HepG2 (cell line): ENCODE measurements at regions of chr12 and their contacts with region 1.

Region 1: DNA sequence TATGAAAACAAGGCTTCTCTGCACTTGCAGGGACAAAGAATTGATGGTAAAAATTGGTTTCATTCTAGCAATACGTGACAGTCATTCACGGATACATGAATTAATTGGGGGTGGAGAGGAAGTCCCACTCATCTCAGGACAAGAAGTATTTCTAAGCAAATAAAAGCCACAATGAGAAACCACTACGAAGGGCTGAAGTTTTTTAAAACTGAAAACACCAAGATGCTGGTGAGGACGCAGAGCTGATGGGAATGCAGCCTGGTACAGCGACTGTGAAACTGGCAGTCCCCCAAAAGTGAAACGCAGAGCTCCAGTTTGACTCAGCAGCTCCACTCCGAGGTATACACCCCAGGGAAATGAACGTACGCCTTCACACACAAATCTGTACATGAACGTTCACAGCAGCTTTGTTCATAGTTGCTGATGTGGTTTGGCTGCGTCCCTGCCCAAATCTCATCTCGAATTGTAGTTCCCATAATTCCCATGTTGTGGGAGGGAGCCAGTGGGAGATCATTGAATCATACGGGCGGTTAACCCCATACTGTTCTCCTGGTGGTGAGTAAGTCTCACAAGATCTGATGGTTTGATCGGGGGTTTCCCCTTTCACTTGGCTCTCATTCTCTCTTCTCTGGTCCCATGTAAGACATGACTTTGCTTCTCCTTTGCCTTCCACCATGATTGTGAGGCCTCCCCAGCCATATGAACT is 89.0 kb downstream of the SCARB1 start:
- DNase-seq: no peak
- ATAC-seq: no peak
- H3K4me3 ChIP-seq: peak overlapping the region in 1 of 3 experiments; percentile 11; a peak in 2 of 6 replicates
- H3K27ac ChIP-seq: no peak overlapping the region
- H3K4me1 ChIP-seq: peaks cover 84% of the 10 kb centered on the region
- H3K27me3 ChIP-seq: no peaks in the 10 kb centered on the region
- CTCF ChIP-seq: no peak
- EP300 ChIP-seq: no peak
- POLR2A ChIP-seq: no peak
- RAD21 ChIP-seq: no peak

Region 2: GRCh38 chr12:124809878-124810277 is 35.3 kb after region 1 on chr12:
- CTCF ChIA-PET with region 1: no interaction called
- POLR2A ChIA-PET with region 1: no interaction called
- in situ Hi-C with region 1: no loop called
- intact Hi-C with region 1: no loop called
- DNase-seq: no peak
- ATAC-seq: no peak
- H3K4me3 ChIP-seq: no peak overlapping the region
- H3K27ac ChIP-seq: no peak overlapping the region
- H3K4me1 ChIP-seq: peaks cover 14% of the 10 kb centered on the region; the same call in 1 of the 2 replicates
- H3K27me3 ChIP-seq: no peaks in the 10 kb centered on the region
- CTCF ChIP-seq: no peak
- EP300 ChIP-seq: no peak
- POLR2A ChIP-seq: no peak
- RAD21 ChIP-seq: no peak

Region 3: DNA sequence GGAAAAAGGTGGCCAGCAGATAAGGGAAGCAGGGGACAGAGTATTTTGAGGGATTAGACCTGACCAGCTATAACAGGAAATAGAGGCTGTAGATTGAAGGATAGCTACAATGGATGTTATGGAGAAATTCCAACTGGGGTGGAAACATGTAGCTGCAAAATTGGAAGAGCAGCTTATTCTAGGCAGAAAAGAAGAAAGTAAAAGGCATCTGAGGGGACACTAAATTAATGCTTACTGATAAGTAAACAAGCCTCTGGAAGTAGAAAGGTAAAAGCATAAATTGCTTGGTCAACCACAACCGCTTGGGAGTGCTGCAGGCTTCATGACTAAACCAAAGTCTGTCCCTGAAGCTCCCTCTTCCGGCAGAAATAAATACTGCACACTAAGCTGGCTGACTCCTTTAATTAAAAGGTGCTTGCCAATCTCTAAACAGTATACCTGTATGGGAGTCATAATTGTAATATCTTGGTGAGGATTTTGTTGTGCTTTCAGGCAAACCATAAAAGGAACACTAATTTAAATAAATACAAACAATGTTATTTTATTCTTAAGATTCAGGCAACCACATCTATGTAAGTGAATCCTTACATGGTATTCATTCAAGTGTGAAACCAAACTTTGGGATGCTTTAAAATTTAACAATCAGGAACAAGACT is 132.1 kb after region 1 on chr12:
- CTCF ChIA-PET with region 1: interaction called, 4 read pairs
- POLR2A ChIA-PET with region 1: interaction called, 5 read pairs
- in situ Hi-C with region 1: no loop called
- intact Hi-C with region 1: loop called (anchors 5 kb)
- DNase-seq: peak; percentile 93
- ATAC-seq: peak; percentile 51
- H3K4me3 ChIP-seq: no peak overlapping the region
- H3K27ac ChIP-seq: no peak overlapping the region
- H3K4me1 ChIP-seq: peaks cover 69% of the 10 kb centered on the region
- H3K27me3 ChIP-seq: no peaks in the 10 kb centered on the region
- CTCF ChIP-seq: peak; percentile 91
- EP300 ChIP-seq: no peak
- POLR2A ChIP-seq: peak in 1 of 2 experiments; percentile 47; a peak in 1 of 4 replicates
- RAD21 ChIP-seq: peak; percentile 90